BJ (cell line): ENCODE measurements at regions of chr15 and their contacts with region 1.

Region 1: DNA sequence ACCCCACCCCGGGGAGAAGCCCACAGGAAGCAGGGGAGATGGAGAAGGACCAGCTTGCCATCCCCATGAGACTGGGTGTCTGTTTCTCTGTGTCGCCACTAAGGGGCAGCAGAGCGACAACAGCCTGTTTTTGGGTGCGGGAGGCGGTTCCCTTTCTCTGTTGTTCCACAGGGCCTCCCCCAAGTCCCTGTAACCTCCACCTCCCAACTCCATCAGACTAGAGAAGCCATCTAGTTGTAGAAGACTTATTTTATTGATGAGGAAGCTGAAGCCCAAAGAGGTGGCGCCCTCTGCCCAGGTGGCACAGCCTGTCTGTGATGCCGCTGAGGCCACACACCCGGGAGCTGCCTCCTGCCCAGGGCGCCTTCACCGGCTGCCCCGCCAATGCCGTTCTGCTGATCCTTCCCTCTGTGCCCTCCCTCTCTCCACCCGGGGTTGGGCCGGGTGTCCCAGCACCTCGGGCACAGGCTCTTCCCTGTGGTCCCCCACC is 3.9 kb upstream of the CCDC9B start:
- DNase-seq: no peak
- H3K4me3 ChIP-seq: no peak overlapping the region
- H3K27me3 ChIP-seq: no peaks in the 10 kb centered on the region
- CTCF ChIP-seq: peak; percentile 81

Region 2: DNA sequence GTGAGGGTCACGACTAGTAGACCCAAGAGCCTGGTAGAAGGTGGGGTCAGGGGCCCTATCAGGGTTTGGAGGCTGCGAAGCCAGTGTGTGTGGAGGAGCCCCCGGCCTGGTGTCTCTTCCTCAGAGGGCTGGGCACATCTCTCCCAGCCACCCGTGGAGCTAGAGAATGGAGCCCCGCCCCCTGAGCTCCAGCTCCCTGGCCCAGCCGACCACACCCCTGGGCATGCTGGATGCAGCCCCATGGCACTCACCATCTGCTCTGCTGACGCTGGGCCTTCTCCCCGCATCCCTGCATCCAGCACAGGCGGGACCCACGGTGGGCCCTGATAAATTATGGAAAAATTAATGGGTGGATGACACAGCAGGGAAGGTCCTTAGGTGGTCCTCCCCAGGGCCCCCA is 79.3 kb before region 1 on chr15:
- CTCF ChIA-PET with region 1: no interaction called
- POLR2A ChIA-PET with region 1: no interaction called
- DNase-seq: no peak
- H3K4me3 ChIP-seq: no peak overlapping the region
- H3K27me3 ChIP-seq: peaks cover 4% of the 10 kb centered on the region
- CTCF ChIP-seq: no peak

Region 3: GRCh38 chr15:40323239-40323952 is 21.3 kb before region 1 on chr15 and contains the start of gene INAFM2:
- CTCF ChIA-PET with region 1: interaction called, 124 read pairs
- POLR2A ChIA-PET with region 1: interaction called, 17 read pairs
- DNase-seq: peak; percentile 62
- H3K4me3 ChIP-seq: peak within 1 kb of the TSS; percentile 72
- H3K27me3 ChIP-seq: no peaks in the 10 kb centered on the region; the same call in 1 of the 2 replicates
- CTCF ChIP-seq: peak; percentile 64
- polyA plus RNA-seq, gene INAFM2: 7.3 and 12.8 TPM in 2 replicates

Region 4: GRCh38 chr15:40367686-40368611 is 23.3 kb after region 1 on chr15:
- CTCF ChIA-PET with region 1: interaction called, 57 read pairs
- POLR2A ChIA-PET with region 1: no interaction called
- DNase-seq: no peak
- H3K4me3 ChIP-seq: peak overlapping the region; percentile 25
- H3K27me3 ChIP-seq: no peaks in the 10 kb centered on the region
- CTCF ChIP-seq: peak; percentile 59

Region 5: GRCh38 chr15:40372981-40373380 is 28.3 kb after region 1 on chr15:
- CTCF ChIA-PET with region 1: interaction called, 57 read pairs
- POLR2A ChIA-PET with region 1: no interaction called
- DNase-seq: no peak
- H3K4me3 ChIP-seq: no peak overlapping the region
- H3K27me3 ChIP-seq: no peaks in the 10 kb centered on the region
- CTCF ChIP-seq: no peak

Region 6: GRCh38 chr15:40405501-40406381 is 61.1 kb after region 1 on chr15 and contains the start of gene IVD:
- CTCF ChIA-PET with region 1: interaction called, 12 read pairs
- POLR2A ChIA-PET with region 1: interaction called, 4 read pairs
- DNase-seq: peak; percentile 81
- H3K4me3 ChIP-seq: peak within 1 kb of the TSS; percentile 84
- H3K27me3 ChIP-seq: no peaks in the 10 kb centered on the region
- CTCF ChIP-seq: no peak
- polyA plus RNA-seq, gene IVD: 48.6 and 63.9 TPM in 2 replicates

Region 7: GRCh38 chr15:40421246-40422157 is 76.8 kb after region 1 on chr15:
- CTCF ChIA-PET with region 1: interaction called, 37 read pairs
- POLR2A ChIA-PET with region 1: no interaction called
- DNase-seq: no peak
- H3K4me3 ChIP-seq: no peak overlapping the region
- H3K27me3 ChIP-seq: no peaks in the 10 kb centered on the region
- CTCF ChIP-seq: peak; percentile 99